HepG2 (cell line): ENCODE measurements at regions of chr13 and their contacts with region 1.

Region 1: GRCh38 chr13:62357887-62358645 is 942.4 kb upstream of the PCDH20 start:
- DNase-seq: peak; percentile 60
- ATAC-seq: peak; percentile 100
- H3K4me3 ChIP-seq: no peak overlapping the region
- H3K27ac ChIP-seq: no peak overlapping the region
- H3K4me1 ChIP-seq: no peaks in the 10 kb centered on the region
- H3K27me3 ChIP-seq: no peaks in the 10 kb centered on the region
- CTCF ChIP-seq: peak; percentile 78
- EP300 ChIP-seq: no peak
- POLR2A ChIP-seq: no peak
- RAD21 ChIP-seq: peak; percentile 57

Region 2: GRCh38 chr13:62014299-62014698 is 343.8 kb before region 1 on chr13:
- CTCF ChIA-PET with region 1: no interaction called
- POLR2A ChIA-PET with region 1: no interaction called
- in situ Hi-C with region 1: no loop called
- intact Hi-C with region 1: loop called (anchors 1 kb)
- DNase-seq: peak; percentile 9
- ATAC-seq: no peak; the same call in 2 of the 3 replicates
- H3K4me3 ChIP-seq: no peak overlapping the region
- H3K27ac ChIP-seq: no peak overlapping the region
- H3K4me1 ChIP-seq: no peaks in the 10 kb centered on the region
- H3K27me3 ChIP-seq: no peaks in the 10 kb centered on the region
- CTCF ChIP-seq: peak; percentile 15; the same call in 1 of the 2 replicates
- EP300 ChIP-seq: no peak
- POLR2A ChIP-seq: no peak
- RAD21 ChIP-seq: no peak

Region 3: GRCh38 chr13:62119739-62120700 is 238.0 kb before region 1 on chr13:
- CTCF ChIA-PET with region 1: interaction called, 15 read pairs
- POLR2A ChIA-PET with region 1: no interaction called
- in situ Hi-C with region 1: loop called (anchors 25 kb)
- intact Hi-C with region 1: loop called (anchors 1 kb)
- DNase-seq: no peak
- ATAC-seq: no peak
- H3K4me3 ChIP-seq: no peak overlapping the region
- H3K27ac ChIP-seq: no peak overlapping the region
- H3K4me1 ChIP-seq: no peaks in the 10 kb centered on the region
- H3K27me3 ChIP-seq: no peaks in the 10 kb centered on the region
- CTCF ChIP-seq: peak; percentile 24
- EP300 ChIP-seq: no peak
- POLR2A ChIP-seq: no peak
- RAD21 ChIP-seq: no peak

Region 4: DNA sequence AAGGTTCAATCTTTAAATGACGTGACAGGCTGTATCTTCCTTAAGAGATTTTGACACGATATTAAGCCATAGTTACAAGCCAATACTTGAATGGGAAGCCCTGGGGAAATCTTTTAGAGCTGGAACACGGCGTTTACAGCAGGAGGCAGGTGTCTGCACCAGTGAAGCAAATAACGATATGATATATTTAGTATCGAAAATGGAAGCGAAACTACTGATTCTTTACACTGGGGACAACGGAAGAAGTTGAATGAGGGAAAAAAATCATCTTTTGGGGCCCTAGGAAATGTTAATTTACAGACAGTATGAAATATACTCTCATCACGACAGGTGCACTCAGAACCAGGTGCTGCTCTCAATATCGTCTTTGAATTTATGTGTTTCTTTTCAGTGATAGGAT is 148.5 kb before region 1 on chr13:
- CTCF ChIA-PET with region 1: interaction called, 5 read pairs
- POLR2A ChIA-PET with region 1: no interaction called
- in situ Hi-C with region 1: no loop called
- intact Hi-C with region 1: loop called (anchors 1 kb)
- DNase-seq: no peak
- ATAC-seq: no peak
- H3K4me3 ChIP-seq: no peak overlapping the region
- H3K27ac ChIP-seq: no peak overlapping the region
- H3K4me1 ChIP-seq: no peaks in the 10 kb centered on the region
- H3K27me3 ChIP-seq: no peaks in the 10 kb centered on the region
- CTCF ChIP-seq: no peak
- EP300 ChIP-seq: no peak
- POLR2A ChIP-seq: no peak
- RAD21 ChIP-seq: no peak

Region 5: DNA sequence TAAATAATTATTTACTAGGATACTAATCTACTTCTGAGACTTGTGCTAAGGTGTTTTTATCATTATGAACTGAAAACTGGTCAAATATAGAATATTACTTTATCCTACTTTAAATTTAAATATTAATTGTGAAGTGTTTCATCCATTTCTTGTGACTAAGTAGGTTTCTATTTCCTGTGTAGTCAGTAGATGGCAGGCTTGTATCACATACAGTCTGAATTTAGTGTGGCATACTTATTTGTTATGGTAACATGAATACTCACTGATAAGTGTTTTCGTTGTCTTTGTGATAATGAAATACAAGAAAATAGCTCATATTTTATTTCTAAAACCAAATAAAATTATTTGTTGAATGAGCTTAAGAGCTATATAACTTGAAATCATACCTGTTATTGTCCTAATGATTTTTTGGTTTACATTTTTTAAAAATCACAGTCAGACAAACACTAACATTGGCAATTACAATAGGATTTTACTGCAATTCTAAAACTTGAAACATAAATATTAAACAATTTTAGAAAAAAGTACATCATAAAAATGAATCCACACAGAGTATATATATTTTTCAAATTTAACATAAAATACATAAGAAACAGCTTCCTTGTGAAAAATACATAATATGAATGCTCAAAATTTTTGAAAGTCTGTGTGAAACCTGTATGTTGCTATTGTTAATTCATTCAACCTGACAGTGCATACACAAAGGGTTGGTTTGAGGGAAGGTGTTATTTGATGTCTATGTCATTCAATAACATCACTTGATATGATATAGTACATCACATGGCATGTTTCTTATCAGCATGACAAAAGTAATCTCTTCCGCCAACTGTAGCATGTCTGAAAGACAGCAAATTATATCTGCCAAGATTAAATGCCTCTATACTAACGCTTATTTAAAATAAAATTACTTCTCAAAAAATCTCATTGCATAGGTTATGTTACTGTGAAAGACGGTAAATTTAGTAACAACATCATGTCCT is 37.6 kb before region 1 on chr13:
- CTCF ChIA-PET with region 1: interaction called, 7 read pairs
- POLR2A ChIA-PET with region 1: no interaction called
- in situ Hi-C with region 1: no loop called
- intact Hi-C with region 1: loop called (anchors 1 kb)
- DNase-seq: peak; percentile 22
- ATAC-seq: peak; percentile 46; the same call in 1 of the 3 replicates
- H3K4me3 ChIP-seq: no peak overlapping the region
- H3K27ac ChIP-seq: no peak overlapping the region
- H3K4me1 ChIP-seq: no peaks in the 10 kb centered on the region
- H3K27me3 ChIP-seq: no peaks in the 10 kb centered on the region
- CTCF ChIP-seq: peak; percentile 58
- EP300 ChIP-seq: no peak
- POLR2A ChIP-seq: no peak
- RAD21 ChIP-seq: no peak